Ovary (tissue), 10 donors: ENCODE measurements at regions of chr16 and their contacts with region 1.

Region 1: DNA sequence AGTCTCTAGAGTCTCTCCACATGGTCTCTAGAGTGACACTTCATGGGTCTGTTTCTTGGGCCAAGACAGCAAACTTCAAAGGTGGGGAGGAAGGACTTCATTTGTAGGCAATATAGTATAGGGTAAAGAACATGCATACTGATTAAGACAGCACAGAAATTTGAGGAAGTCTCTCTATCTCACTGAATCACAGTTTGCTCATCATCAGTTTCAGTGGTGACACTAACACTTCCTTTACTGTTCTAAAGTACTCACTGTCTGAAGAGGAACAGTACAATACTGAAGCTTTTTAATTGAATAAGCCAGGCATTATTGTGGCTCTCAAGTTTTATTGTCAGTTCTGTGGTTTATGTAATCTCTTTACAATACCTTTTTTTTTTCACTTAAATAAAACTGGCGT is 656.4 kb upstream of the CDH8 start:
- DNase-seq: no peak
- H3K4me3 ChIP-seq: no peak overlapping the region
- H3K27ac ChIP-seq: no peak overlapping the region
- H3K4me1 ChIP-seq: no peaks in the 10 kb centered on the region
- H3K27me3 ChIP-seq: no peaks in the 10 kb centered on the region
- CTCF ChIP-seq: no peak
- EP300 ChIP-seq: no peak
- POLR2A ChIP-seq: no peak

Region 2: DNA sequence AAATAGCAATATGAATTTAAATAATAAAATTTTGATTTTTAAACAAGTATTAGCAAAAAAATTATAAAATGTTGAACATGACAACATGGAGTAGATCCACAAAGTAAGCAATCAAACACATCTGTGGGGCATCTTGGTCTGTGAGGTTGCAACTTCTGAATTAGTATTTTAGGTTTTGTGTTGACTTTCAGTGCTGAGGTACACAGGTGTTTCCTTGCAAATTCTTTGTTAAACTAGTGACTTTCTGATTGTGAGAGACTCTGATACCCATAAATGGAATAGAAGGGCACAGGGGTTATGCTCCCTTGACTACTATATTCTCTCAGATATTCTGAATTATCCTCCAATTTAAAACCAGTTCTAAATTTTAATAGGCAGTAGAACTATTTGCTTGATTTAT is 1498.1 kb before region 1 on chr16:
- intact Hi-C with region 1: loop called in 1 of 4 experiments (anchors 5 kb)
- DNase-seq: no peak
- H3K4me3 ChIP-seq: no peak overlapping the region
- H3K27ac ChIP-seq: no peak overlapping the region
- H3K4me1 ChIP-seq: no peaks in the 10 kb centered on the region
- H3K27me3 ChIP-seq: no peaks in the 10 kb centered on the region
- CTCF ChIP-seq: no peak
- EP300 ChIP-seq: no peak
- POLR2A ChIP-seq: no peak